Endothelial cell of umbilical vein (primary cell): ENCODE measurements at regions of chr16 and their contacts with region 1.

Region 1: DNA sequence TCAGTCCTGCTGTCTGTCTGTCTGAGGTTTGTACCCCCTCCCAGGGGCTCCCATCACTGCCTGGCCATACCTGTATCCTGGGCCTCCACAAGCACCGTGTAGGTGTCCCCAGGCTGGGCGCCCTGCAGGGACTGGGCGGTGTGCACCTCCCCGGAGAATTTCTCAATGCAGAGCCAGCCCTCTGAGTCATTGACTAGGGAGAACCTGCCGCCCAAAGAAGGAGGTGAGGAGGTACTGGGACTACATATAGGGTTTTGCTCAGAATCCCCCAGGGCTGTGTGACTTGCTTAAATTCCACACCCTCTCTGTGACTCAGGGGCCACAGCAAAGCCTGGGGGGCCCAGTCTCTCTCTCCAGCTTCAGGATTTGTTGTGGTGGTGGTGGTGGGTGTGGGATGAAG is 7.6 kb downstream of the CDH16 start:
- DNase-seq: no peak
- H3K4me3 ChIP-seq: no peak overlapping the region
- H3K27ac ChIP-seq: no peak overlapping the region
- H3K4me1 ChIP-seq: no peaks in the 10 kb centered on the region
- H3K27me3 ChIP-seq: peaks cover 0 to 2% of the 10 kb centered on the region in 2 experiments
- CTCF ChIP-seq: no peak
- POLR2A ChIP-seq: no peak

Region 2: GRCh38 chr16:65342231-65342866 is 1568.8 kb before region 1 on chr16:
- CTCF ChIA-PET with region 1: no interaction called
- POLR2A ChIA-PET with region 1: no interaction called
- dilution Hi-C with region 1: no loop called
- intact Hi-C with region 1: no loop called
- DNase-seq: no peak
- H3K4me3 ChIP-seq: no peak overlapping the region
- H3K27ac ChIP-seq: no peak overlapping the region
- H3K4me1 ChIP-seq: no peaks in the 10 kb centered on the region
- H3K27me3 ChIP-seq: no peaks in the 10 kb centered on the region
- CTCF ChIP-seq: no peak
- POLR2A ChIP-seq: no peak

Region 3: DNA sequence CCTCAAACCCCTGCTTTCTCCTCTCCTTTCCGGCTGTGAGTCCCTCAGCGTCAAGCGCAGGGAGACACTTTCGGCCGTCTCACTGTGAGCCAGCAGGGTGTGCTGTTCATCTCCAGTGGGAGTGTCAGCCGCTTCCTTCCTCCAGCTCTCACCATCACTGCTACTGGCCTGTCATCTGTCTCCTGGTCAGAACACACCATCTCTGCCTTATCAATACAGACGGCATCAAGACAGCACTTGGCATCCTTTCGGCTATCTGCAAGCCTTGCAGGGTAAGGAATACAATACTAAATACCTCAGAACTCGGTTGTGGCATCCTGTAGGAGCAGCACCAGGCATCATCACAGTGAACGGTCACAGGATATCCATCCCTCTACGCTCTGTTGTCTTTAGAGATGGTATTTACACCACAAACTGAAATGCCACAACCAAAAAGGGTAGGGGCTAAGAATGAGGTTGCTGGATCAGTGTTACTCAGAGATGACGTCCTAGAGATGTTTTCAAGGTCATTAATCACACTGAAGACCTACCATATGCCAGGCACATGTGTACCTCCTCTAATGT is 193.9 kb before region 1 on chr16:
- CTCF ChIA-PET with region 1: no interaction called
- POLR2A ChIA-PET with region 1: no interaction called
- dilution Hi-C with region 1: no loop called
- intact Hi-C with region 1: no loop called
- DNase-seq: peak; percentile 16
- H3K4me3 ChIP-seq: no peak overlapping the region
- H3K27ac ChIP-seq: no peak overlapping the region
- H3K4me1 ChIP-seq: no peaks in the 10 kb centered on the region
- H3K27me3 ChIP-seq: no peaks in the 10 kb centered on the region
- CTCF ChIP-seq: peak; percentile 43 to 61
- POLR2A ChIP-seq: no peak

Region 4: DNA sequence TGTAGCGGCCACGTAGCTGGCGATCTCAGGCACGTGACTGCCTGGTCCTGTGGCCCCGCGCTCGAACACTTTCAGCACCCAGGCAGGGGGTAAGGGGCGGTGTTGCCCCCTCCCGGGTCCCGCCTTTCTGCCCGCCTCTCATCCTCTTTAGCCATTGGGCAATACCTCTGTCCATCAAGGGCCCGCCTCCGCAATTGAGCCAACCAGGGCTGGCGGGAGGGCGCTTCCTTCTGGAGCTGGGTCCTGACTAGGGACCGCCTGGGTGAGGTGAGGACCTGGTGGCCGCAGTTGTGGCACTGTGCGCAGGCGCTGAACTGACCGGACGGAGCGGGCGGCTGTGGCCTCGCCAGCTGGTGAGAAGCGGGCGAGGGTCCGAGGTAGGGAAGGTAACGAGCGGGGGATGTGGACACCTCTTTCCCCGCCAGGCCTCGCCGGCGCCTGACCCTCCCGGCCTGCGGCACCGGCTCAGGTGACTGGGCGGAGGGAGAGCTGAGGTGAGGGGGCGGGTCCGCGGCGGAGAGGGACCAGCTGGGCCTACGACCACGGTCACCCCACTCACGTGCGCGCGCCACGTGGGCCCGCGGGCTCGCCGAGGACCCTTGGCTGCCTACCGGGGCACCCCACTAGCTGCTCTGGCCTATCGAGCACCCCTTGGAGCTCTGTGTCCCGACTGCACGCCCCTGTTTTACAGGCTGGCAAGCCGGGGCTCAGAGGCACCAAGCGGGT is 30.7 kb before region 1 on chr16 and contains the start of gene PDP2:
- CTCF ChIA-PET with region 1: interaction called, 16 read pairs
- POLR2A ChIA-PET with region 1: no interaction called
- dilution Hi-C with region 1: no loop called
- intact Hi-C with region 1: no loop called
- DNase-seq: peak; percentile 93
- H3K4me3 ChIP-seq: peak within 1 kb of the TSS; percentile 9 to 83 (median 57)
- H3K27ac ChIP-seq: no peak within 1 kb of the TSS
- H3K4me1 ChIP-seq: peaks cover 7% of the 10 kb centered on the region
- H3K27me3 ChIP-seq: no peaks in the 10 kb centered on the region
- CTCF ChIP-seq: no peak
- POLR2A ChIP-seq: no peak
- total RNA-seq, gene PDP2: 9.3 and 9.5 TPM in 2 replicates

Region 5: GRCh38 chr16:66924527-66925321 is 13.6 kb after region 1 on chr16:
- CTCF ChIA-PET with region 1: interaction called, 19 read pairs
- POLR2A ChIA-PET with region 1: no interaction called
- dilution Hi-C with region 1: no loop called
- intact Hi-C with region 1: no loop called
- DNase-seq: no peak
- H3K4me3 ChIP-seq: peak overlapping the region in 2 of 3 experiments; percentile 14 to 20
- H3K27ac ChIP-seq: no peak overlapping the region
- H3K4me1 ChIP-seq: peaks cover 3% of the 10 kb centered on the region
- H3K27me3 ChIP-seq: peaks cover 30 to 41% of the 10 kb centered on the region in 2 experiments
- CTCF ChIP-seq: peak; percentile 36 to 44
- POLR2A ChIP-seq: no peak